B cell (primary cell): ENCODE measurements at regions of chr1 and their contacts with region 1.

Region 1: DNA sequence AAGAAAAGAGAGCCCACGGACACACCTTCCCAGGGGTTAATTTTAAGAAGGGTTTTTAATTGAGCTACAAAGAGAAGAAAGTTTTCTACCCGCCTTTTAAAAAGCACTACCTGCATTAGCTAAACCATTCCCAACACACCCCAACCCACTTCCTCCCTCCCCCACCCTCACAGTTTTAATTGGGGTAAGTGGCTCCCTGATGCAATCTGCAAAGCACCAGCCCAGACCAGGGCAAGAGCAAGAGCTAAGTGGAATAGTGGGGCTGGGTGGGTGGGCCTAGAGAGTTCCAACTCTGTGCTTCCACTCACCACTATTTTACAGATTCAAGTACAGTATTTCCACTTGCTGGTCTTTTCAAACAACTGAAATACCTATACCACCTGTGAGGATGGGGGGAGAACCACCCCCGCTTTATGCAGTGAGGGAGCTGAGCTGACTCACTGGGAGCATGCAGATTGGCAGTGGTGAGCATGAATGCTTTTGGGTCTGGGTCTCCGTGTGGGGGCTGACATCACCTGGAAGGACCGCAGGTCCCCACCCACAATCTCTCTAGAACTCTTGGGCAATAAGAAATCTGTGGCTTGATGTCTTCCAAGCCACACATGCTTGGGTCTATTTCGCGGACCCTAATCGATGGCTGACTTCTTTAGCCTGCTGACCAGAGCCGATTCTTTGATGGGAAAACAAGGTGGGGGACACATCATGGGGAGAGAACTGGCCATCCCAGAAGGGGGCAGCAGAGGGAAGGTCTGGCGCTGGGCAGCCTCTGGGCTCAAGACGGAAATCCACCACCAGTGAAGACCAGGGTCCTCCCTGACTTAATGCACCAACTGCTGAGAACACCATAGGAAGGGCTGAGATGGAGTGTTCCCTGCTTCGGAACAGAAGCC is 95.5 kb downstream of the SSBP3 start:
- DNase-seq: no peak
- ATAC-seq: no peak
- H3K4me3 ChIP-seq: no peak overlapping the region
- H3K4me3 Mint-ChIP-seq: no peak overlapping the region
- H3K27ac ChIP-seq: no peak overlapping the region
- H3K27ac Mint-ChIP-seq: no peak overlapping the region
- H3K4me1 ChIP-seq: no peaks in the 10 kb centered on the region
- H3K4me1 Mint-ChIP-seq: peaks cover 2% of the 10 kb centered on the region
- H3K27me3 ChIP-seq: no peaks in the 10 kb centered on the region
- H3K27me3 Mint-ChIP-seq: no peaks in the 10 kb centered on the region
- CTCF ChIP-seq: no peak

Region 2: GRCh38 chr1:54376430-54377039 is 65.9 kb after region 1 on chr1:
- CTCF ChIA-PET with region 1: no interaction called
- POLR2A ChIA-PET with region 1: interaction called, 4 read pairs
- intact Hi-C with region 1: loop called (anchors 10 kb)
- DNase-seq: peak; percentile 58
- ATAC-seq: peak; percentile 57
- H3K4me3 ChIP-seq: no peak overlapping the region
- H3K4me3 Mint-ChIP-seq: peak overlapping the region; percentile 49
- H3K27ac ChIP-seq: peak overlapping the region; percentile 48 to 61
- H3K27ac Mint-ChIP-seq: peak overlapping the region; percentile 82
- H3K4me1 ChIP-seq: peaks cover 9 to 62% of the 10 kb centered on the region in 2 donors
- H3K4me1 Mint-ChIP-seq: peaks cover 62% of the 10 kb centered on the region
- H3K27me3 ChIP-seq: no peaks in the 10 kb centered on the region
- H3K27me3 Mint-ChIP-seq: no peaks in the 10 kb centered on the region
- CTCF ChIP-seq: no peak

Region 3: GRCh38 chr1:54627196-54627595 is 316.5 kb after region 1 on chr1:
- CTCF ChIA-PET with region 1: no interaction called
- POLR2A ChIA-PET with region 1: no interaction called
- intact Hi-C with region 1: no loop called
- DNase-seq: no peak
- ATAC-seq: no peak
- H3K4me3 ChIP-seq: no peak overlapping the region
- H3K4me3 Mint-ChIP-seq: no peak overlapping the region
- H3K27ac ChIP-seq: no peak overlapping the region
- H3K27ac Mint-ChIP-seq: no peak overlapping the region
- H3K4me1 ChIP-seq: no peaks in the 10 kb centered on the region
- H3K4me1 Mint-ChIP-seq: no peaks in the 10 kb centered on the region
- H3K27me3 ChIP-seq: no peaks in the 10 kb centered on the region
- H3K27me3 Mint-ChIP-seq: peaks cover 16% of the 10 kb centered on the region
- CTCF ChIP-seq: no peak